Esophagus squamous epithelium (tissue), 5 donors: ENCODE measurements at regions of chr13 and their contacts with region 1.

Region 1: DNA sequence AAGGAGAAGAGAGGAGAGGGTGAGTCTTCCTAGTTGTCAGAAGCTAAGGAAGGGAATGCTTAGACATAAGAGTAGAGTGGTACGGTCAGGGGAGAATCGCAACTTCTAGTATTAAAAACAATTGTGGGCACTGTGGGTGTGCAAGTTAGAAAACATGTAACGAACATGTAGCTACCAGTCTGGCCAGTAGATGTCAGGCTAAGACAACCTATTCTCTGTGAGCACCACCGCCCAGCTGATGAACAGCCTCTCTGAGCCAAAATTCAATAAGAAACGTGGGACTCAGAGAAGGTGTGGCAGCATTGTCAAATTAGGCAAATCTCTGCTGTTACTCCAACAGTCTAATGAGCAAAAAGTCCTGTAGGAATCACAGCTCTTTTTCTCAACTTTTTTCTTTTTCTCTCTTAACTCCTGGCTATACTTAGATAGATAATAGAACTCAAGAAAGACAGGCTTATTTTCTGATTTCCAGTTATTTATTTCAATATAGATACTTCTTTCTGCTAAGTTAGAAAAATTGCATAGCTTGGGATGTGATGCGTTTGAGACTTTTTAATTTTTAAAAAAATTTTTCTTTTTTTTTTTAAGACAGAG is 186.2 kb downstream of the USP12 start:
- DNase-seq: no peak
- H3K4me3 ChIP-seq: no peak overlapping the region
- H3K27ac ChIP-seq: peak overlapping the region in 3 of 4 donors; percentile 44 to 81 (median 66)
- H3K4me1 ChIP-seq: peaks cover 0 to 22% (median 3%) of the 10 kb centered on the region in 3 donors
- H3K27me3 ChIP-seq: peaks cover 0 to 13% (median 0%) of the 10 kb centered on the region in 4 donors
- CTCF ChIP-seq: peak; percentile 54 to 89 (median 82)
- POLR2A ChIP-seq: no peak

Region 2: GRCh38 chr13:27171827-27172494 is 186.6 kb after region 1 on chr13:
- intact Hi-C with region 1: loop called (anchors 10 kb)
- DNase-seq: peak; percentile 36
- H3K4me3 ChIP-seq: peak overlapping the region; percentile 44 to 97 (median 79)
- H3K27ac ChIP-seq: peak overlapping the region; percentile 94 to 98 (median 96)
- H3K4me1 ChIP-seq: peaks cover 22 to 62% (median 25%) of the 10 kb centered on the region in 3 donors
- H3K27me3 ChIP-seq: no peaks in the 10 kb centered on the region
- CTCF ChIP-seq: peak in 3 of 6 experiments; percentile 6 to 17 (median 15)
- POLR2A ChIP-seq: peak in 1 of 4 donors; percentile 10

Region 3: DNA sequence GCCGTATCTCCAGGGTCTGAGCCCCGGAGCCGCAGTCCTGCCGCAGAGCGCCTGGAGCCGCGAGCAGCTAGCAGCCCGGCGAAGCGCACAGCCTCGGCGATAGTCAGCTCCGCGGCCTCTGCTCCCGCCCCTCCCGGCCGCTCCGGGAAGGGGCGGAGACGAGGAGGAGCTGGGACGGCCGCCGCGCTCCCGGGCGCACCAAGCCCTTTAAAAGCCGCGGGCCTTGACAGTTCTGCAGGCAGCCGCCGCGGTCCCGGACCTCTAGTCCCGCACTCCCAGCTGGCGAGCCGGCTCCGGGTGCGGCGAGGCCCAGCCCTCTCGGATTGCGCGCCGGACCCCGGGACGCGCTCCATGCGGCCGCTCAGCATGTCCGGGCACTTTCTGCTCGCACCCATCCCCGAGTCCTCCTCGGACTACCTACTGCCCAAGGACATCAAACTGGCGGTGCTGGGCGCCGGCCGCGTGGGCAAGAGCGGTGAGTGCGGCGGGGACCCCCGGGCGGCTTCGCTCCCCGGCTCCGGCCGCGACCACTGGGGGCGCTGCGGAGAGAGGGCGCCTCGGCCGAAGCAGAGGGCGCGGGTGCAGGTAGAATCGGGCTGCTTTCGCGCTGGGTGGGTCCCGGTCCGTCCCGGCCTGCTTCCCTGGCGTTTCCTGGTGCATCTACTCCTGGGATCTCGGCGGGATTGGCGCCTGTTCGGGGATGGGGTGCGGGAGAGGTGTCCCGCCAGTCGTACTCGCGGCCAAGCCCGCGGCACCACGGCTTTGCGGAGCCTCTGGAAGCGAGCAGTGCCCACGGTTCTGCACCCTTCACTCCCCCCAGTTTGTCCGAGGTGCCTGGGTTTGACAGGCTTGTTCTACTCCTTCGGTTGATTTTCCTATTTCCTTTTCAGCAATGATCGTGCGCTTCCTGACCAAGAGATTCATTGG is 285.5 kb after region 1 on chr13 and contains the start of gene RASL11A:
- intact Hi-C with region 1: loop called (anchors 10 kb)
- DNase-seq: peak; percentile 17
- H3K4me3 ChIP-seq: peak within 1 kb of the TSS; percentile 69 to 85 (median 74)
- H3K27ac ChIP-seq: peak within 1 kb of the TSS; percentile 89 to 95 (median 91)
- H3K4me1 ChIP-seq: peaks cover 10 to 78% (median 15%) of the 10 kb centered on the region in 3 donors
- H3K27me3 ChIP-seq: no peaks in the 10 kb centered on the region
- CTCF ChIP-seq: peak; percentile 79 to 97 (median 94)
- POLR2A ChIP-seq: peak in 2 of 4 donors; percentile 90 to 96
- total RNA-seq, gene RASL11A: 4.4 to 34.1 (median 21.9) TPM

Region 4: DNA sequence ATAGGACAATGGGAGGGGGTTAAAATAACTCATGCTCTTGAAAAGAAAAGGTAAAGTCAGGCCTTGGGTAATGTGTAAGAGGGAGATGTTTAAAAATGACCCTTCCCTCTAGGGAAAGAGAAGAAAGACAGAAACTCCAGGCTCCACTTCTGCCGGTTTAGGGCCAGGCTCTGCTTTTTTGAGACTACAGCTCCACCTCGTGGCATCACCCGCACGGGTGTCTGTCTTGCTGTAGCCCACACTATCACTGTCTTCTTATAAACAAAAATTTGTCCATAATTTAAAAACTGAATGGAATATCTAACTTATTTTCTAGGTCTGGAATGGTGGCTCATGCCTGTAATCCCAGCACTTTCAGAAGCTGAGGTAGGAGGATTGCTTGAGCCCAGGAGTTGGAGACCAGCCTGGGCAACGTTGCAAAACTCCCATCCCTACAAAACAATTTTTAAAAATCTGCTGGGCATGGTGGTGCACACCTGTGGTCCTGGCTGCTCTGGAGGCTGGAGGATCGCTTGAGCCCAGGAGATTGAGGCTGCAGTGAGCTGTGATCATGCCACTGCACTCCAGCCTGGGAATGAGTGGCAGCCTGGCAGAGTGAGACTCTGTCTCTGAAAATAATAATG is 373.9 kb after region 1 on chr13:
- intact Hi-C with region 1: loop called (anchors 5 kb)
- DNase-seq: no peak
- H3K4me3 ChIP-seq: no peak overlapping the region
- H3K27ac ChIP-seq: no peak overlapping the region
- H3K4me1 ChIP-seq: peaks cover 0 to 13% (median 11%) of the 10 kb centered on the region in 3 donors
- H3K27me3 ChIP-seq: peaks cover 0 to 43% (median 0%) of the 10 kb centered on the region in 4 donors
- CTCF ChIP-seq: peak; percentile 64 to 80 (median 72)
- POLR2A ChIP-seq: no peak